ENCODE measurements at regions of chr11 and their contacts with region 1.

Region 1: DNA sequence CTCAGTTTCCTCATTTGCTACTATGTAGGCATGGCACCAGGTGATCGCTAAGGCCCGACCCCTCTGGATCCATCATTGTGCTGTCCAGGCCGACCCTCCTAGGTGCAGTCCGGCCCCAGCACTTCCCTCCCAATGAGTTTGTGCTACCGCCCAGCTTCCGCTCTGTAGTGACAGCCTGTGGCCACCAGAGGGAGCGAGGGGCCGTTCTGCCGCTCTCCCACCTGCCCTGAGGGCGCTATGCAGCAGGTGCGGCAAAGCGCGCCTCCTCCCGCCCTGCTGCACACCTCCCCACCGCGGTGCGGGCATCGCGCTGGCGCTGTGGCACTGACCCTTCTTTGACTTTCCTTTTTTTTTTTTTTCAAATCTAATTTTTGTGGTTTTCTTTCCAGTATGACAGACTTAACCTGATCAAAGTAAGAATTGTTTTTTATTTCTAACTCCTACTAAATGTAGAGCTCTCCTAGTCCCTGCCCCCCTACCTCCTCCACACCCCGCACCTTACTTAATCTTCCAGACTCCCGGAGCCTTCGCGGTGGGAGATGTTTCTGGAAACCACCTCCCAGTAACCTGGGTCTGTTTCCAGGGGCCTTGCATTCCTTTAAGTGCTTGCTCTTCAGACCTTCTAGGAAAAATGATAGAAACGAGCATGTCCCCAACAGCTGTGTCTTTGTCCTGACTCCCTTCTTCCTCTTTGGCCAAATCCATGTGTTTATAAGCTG is 73.7 kb downstream of the SCN3B start:
- DNase-seq: peak in 8 of 10 donors; percentile 39 to 90 (median 66)
- H3K4me3 ChIP-seq: peak overlapping the region in 1 of 59 donors; percentile 41
- H3K27ac ChIP-seq: peak overlapping the region in 14 of 59 donors; percentile 9 to 97 (median 19)
- H3K27me3 ChIP-seq: no peaks in the 10 kb centered on the region
- CTCF ChIP-seq: peak; percentile 42 to 89 (median 80)

Region 2: DNA sequence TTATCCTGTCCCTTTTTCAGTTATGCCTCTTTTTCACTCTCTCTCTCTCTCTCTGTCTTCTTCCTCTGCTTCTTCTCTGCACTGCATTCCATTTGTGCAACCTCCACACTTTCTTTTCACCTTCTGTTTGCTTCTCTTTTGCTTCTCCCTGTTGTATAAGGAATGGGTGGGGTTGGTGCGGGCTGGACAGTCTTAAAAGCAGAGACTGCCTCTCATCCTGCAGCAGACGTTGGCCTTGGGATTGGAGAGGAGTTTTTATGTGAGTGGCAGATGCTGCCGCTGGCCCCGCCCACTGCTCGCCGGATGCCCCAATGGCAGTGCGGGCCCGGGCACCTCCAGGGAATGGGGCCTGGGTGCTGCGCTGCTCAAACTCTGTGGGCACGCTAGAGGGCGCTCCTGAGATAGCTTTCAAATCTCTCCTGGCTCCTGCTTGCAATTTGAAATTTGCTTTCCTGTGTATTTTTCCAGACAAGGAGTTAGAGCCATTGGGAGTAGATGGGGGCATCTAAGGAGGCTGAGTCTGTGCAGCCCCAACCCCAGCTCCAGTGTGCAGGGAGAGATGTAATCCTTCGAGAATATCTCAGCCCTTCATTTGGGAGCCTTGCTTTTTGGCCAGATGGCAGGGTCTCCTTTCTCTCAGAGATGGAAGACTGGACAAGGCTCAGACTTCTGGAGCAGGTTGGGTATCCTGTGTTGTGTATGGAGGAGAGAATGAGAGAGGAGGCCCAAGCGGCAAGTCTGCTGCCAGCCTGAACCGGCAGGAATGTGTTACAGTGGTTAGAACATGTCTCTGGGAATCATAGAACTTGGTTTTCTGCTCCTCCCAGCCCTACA is 69.5 kb before region 1 on chr11:
- intact Hi-C with region 1: loop called (anchors 1 to 2 kb)
- DNase-seq: peak; percentile 83 to 98 (median 94)
- H3K4me3 ChIP-seq: peak overlapping the region in 52 of 59 donors; percentile 11 to 57 (median 38)
- H3K27ac ChIP-seq: peak overlapping the region in 56 of 59 donors; percentile 44 to 93 (median 82)
- H3K27me3 ChIP-seq: no peaks in the 10 kb centered on the region
- CTCF ChIP-seq: peak; percentile 78 to 98 (median 94)

Region 3: GRCh38 chr11:123523536-123523935 is 57.2 kb before region 1 on chr11:
- intact Hi-C with region 1: no loop called
- DNase-seq: no peak
- H3K4me3 ChIP-seq: no peak overlapping the region
- H3K27ac ChIP-seq: peak overlapping the region in 4 of 59 donors; percentile 6 to 96 (median 17)
- H3K27me3 ChIP-seq: peaks cover 0 to 2% (median 0%) of the 10 kb centered on the region in 45 donors
- CTCF ChIP-seq: no peak

Region 4: DNA sequence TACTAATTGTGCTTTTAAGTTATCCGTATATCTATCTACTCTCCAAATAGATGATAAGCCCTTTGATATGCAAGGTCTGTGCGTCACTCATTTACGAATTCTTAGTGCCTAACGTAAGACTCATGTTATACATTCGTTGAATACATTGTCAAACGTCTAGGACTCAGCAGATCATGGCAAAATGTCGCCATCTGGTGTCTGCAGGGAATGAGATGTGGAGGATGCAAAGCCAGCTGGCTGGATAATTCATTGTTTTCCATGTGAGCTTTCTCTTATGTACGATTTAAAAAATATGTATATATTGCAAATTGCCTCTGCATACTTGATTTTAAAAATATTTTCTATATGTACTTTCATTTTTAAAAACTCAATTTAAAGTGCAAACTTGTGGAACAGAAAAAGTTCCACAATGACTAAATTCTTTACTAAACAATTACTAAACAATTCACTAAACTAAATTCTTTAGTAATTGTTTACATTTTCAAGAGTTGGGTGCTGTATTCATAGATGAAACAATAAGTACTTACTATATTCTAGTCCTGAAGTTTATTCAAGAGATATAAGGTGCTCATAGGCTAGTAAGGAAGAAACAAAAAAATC is 127.0 kb after region 1 on chr11:
- intact Hi-C with region 1: loop called in 1 of 2 experiments (anchors 5 kb)
- DNase-seq: peak; percentile 24 to 81 (median 72)
- H3K4me3 ChIP-seq: no peak overlapping the region
- H3K27ac ChIP-seq: no peak overlapping the region
- H3K27me3 ChIP-seq: peaks cover 0 to 4% (median 0%) of the 10 kb centered on the region in 45 donors
- CTCF ChIP-seq: peak; percentile 32 to 89 (median 72)